Heart right ventricle (tissue), 16 donors: ENCODE measurements at regions of chr11 and their contacts with region 1.

Region 1: GRCh38 chr11:97702951-97703350 is 1313.1 kb downstream of the JRKL start:
- DNase-seq: no peak
- ATAC-seq: no peak
- H3K4me3 ChIP-seq: no peak overlapping the region
- H3K27ac ChIP-seq: no peak overlapping the region
- H3K4me1 ChIP-seq: no peaks in the 10 kb centered on the region
- H3K27me3 ChIP-seq: no peaks in the 10 kb centered on the region
- CTCF ChIP-seq: no peak

Region 2: DNA sequence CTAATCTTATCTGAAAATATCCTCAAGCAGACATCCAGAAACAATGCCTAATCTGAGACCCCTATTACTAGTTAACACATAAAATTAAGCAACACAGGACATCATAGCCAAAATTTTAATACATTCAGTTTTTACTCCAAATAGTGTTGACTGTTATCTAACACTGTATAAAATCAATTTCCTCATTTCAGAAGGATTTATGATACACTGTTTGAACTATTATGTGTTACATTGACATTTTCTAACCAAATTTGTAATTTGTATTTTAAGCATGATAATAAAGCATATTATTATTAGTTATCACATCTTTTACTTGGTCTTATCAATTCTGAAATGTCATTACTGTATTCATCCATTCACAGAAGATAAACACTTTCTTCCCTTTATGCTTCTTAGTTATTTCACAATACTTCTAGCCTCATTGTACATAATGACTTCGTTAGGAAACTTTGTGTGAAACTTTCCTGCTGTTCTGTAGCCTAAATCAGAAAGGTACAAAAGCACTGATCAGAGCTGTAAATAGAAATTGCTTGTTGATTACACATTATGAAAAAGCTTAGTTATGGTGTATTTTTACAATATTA is 64.2 kb before region 1 on chr11:
- intact Hi-C with region 1: loop called in 1 of 10 experiments (anchors 2 kb)
- DNase-seq: no peak
- ATAC-seq: no peak
- H3K4me3 ChIP-seq: no peak overlapping the region
- H3K27ac ChIP-seq: no peak overlapping the region
- H3K4me1 ChIP-seq: no peaks in the 10 kb centered on the region
- H3K27me3 ChIP-seq: no peaks in the 10 kb centered on the region
- CTCF ChIP-seq: no peak